CD8-positive, alpha-beta T cell (primary cell): ENCODE measurements at regions of chr1 and their contacts with region 1.

Region 1: DNA sequence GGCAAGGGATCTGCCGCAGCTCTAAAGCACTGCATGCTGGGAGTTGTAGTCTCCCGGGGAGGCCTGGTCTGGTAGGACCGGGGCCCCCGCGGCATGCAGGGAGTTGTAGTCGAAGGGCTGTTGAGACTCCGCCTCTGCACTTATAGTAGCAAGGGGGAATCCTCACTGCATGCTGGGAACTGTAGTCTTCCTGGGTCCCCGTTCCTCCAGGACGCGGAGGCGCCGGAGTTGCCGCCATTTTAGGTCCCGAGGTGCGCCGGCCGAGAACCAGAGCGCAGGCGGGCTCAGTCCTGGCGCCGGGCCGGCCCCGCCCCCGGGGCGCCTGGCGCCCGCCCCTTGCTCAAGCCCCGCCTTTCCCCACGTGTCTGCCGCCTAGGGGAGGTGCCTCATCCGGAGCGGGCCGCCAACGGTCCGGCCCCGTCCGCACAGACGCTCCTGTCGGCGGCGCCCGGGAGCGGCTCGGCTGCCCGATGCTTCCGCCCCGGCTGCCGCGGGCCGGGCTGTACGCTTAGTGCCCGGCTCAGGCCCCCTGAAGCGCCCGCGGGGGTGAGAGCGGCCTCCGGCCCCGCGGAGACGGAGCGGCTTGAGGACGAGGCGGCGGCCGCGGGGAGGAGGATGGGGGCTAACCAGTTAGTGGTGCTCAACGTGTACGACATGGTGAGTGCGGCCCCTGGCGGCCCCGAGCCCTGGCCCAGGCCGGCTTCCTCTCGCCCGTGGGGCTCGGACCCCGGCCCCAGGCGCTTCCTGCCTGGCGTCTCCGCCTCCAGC is at the start of gene DESI2:
- DNase-seq: peak; percentile 95 to 100 (median 97)
- ATAC-seq: peak; percentile 92
- H3K4me3 ChIP-seq: peak within 1 kb of the TSS; percentile 67 to 95
- H3K4me3 Mint-ChIP-seq: no peak within 1 kb of the TSS
- H3K27ac ChIP-seq: peak within 1 kb of the TSS; percentile 68 to 73
- H3K27ac Mint-ChIP-seq: peak within 1 kb of the TSS; percentile 86
- H3K4me1 ChIP-seq: peaks cover 22% of the 10 kb centered on the region
- H3K4me1 Mint-ChIP-seq: peaks cover 26% of the 10 kb centered on the region
- H3K27me3 ChIP-seq: no peaks in the 10 kb centered on the region
- H3K27me3 Mint-ChIP-seq: no peaks in the 10 kb centered on the region
- CTCF ChIP-seq: peak; percentile 39
- total RNA-seq, gene DESI2: 14.5 to 16.2 TPM

Region 2: DNA sequence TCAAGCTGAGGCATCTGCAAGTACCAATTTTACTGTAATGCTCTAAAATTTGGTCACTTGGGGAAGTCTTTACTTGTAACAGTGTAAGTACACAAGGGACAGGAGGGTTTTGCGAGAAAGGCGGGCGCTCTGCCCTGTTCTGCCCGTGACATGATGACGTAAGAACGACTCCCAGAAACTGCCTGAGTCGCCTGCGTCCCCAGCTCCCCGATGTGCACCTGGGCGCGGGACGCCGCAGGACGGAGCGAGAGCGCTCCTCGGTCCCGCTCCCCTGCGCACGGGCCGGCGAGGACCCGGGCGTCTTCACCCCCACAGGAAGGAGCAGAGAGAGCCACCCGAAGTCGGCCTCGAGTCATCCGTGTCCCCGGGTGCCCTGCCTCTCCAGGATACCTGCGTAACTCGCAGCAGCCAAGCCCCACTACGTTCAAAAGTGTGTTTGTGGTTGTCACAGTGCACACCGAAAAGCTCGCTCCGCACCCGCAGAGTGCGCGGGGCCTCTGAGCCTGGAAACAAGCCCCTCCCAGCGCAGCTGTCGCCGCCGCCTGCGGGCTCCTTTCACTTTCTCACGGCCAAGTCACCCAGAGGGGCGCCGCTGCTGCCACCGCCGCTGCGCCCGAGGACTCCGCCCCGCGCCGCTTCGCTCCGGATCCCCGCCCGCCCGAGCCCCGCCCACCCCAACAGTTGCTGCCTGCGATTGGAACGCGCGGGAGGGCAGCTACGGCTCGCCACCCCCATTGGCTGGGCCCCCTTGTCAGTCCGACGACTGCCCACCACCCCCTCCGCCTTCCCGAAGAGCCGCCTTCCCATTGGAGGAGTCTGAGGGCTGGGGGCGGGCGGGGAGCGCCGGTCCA is 605.0 kb before region 1 on chr1:
- CTCF ChIA-PET with region 1: no interaction called
- POLR2A ChIA-PET with region 1: interaction called, 3 read pairs
- intact Hi-C with region 1: loop called in 1 of 2 experiments (anchors 10 kb)
- DNase-seq: peak; percentile 95 to 99 (median 97)
- ATAC-seq: peak; percentile 72
- H3K4me3 ChIP-seq: peak overlapping the region; percentile 83
- H3K4me3 Mint-ChIP-seq: peak overlapping the region; percentile 89
- H3K27ac ChIP-seq: peak overlapping the region; percentile 95 to 97
- H3K27ac Mint-ChIP-seq: peak overlapping the region; percentile 98
- H3K4me1 ChIP-seq: peaks cover 40% of the 10 kb centered on the region
- H3K4me1 Mint-ChIP-seq: peaks cover 26% of the 10 kb centered on the region
- H3K27me3 ChIP-seq: no peaks in the 10 kb centered on the region
- H3K27me3 Mint-ChIP-seq: no peaks in the 10 kb centered on the region
- CTCF ChIP-seq: no peak

Region 3: GRCh38 chr1:244451951-244452795 is 200.7 kb before region 1 on chr1:
- CTCF ChIA-PET with region 1: no interaction called
- POLR2A ChIA-PET with region 1: interaction called, 3 read pairs
- intact Hi-C with region 1: loop called (anchors 1 kb)
- DNase-seq: peak; percentile 97 to 100 (median 99)
- ATAC-seq: peak; percentile 83
- H3K4me3 ChIP-seq: peak overlapping the region; percentile 78 to 95
- H3K4me3 Mint-ChIP-seq: peak overlapping the region; percentile 91
- H3K27ac ChIP-seq: peak overlapping the region; percentile 95 to 96
- H3K27ac Mint-ChIP-seq: peak overlapping the region; percentile 97
- H3K4me1 ChIP-seq: peaks cover 32% of the 10 kb centered on the region
- H3K4me1 Mint-ChIP-seq: peaks cover 45% of the 10 kb centered on the region
- H3K27me3 ChIP-seq: no peaks in the 10 kb centered on the region
- H3K27me3 Mint-ChIP-seq: no peaks in the 10 kb centered on the region
- CTCF ChIP-seq: peak; percentile 55

Region 4: GRCh38 chr1:244599937-244600350 is 52.9 kb before region 1 on chr1:
- CTCF ChIA-PET with region 1: interaction called, 6 read pairs
- POLR2A ChIA-PET with region 1: no interaction called
- intact Hi-C with region 1: loop called in 1 of 2 experiments (anchors 1 kb)
- DNase-seq: peak in 5 of 9 experiments; percentile 6 to 38 (median 24)
- ATAC-seq: peak; percentile 87
- H3K4me3 ChIP-seq: no peak overlapping the region
- H3K4me3 Mint-ChIP-seq: no peak overlapping the region
- H3K27ac ChIP-seq: no peak overlapping the region
- H3K27ac Mint-ChIP-seq: no peak overlapping the region
- H3K4me1 ChIP-seq: no peaks in the 10 kb centered on the region
- H3K4me1 Mint-ChIP-seq: no peaks in the 10 kb centered on the region
- H3K27me3 ChIP-seq: no peaks in the 10 kb centered on the region
- H3K27me3 Mint-ChIP-seq: no peaks in the 10 kb centered on the region
- CTCF ChIP-seq: no peak

Region 5: GRCh38 chr1:244680667-244681066 is 27.8 kb after region 1 on chr1:
- CTCF ChIA-PET with region 1: no interaction called
- POLR2A ChIA-PET with region 1: no interaction called
- intact Hi-C with region 1: no loop called
- DNase-seq: no peak
- ATAC-seq: no peak
- H3K4me3 ChIP-seq: no peak overlapping the region
- H3K4me3 Mint-ChIP-seq: no peak overlapping the region
- H3K27ac ChIP-seq: no peak overlapping the region
- H3K27ac Mint-ChIP-seq: no peak overlapping the region
- H3K4me1 ChIP-seq: no peaks in the 10 kb centered on the region
- H3K4me1 Mint-ChIP-seq: peaks cover 35% of the 10 kb centered on the region
- H3K27me3 ChIP-seq: no peaks in the 10 kb centered on the region
- H3K27me3 Mint-ChIP-seq: no peaks in the 10 kb centered on the region
- CTCF ChIP-seq: no peak

Region 6: GRCh38 chr1:244735404-244735803 is 82.5 kb after region 1 on chr1:
- CTCF ChIA-PET with region 1: no interaction called
- POLR2A ChIA-PET with region 1: no interaction called
- intact Hi-C with region 1: no loop called
- DNase-seq: no peak
- ATAC-seq: no peak
- H3K4me3 ChIP-seq: no peak overlapping the region
- H3K4me3 Mint-ChIP-seq: no peak overlapping the region
- H3K27ac ChIP-seq: no peak overlapping the region
- H3K27ac Mint-ChIP-seq: no peak overlapping the region
- H3K4me1 ChIP-seq: no peaks in the 10 kb centered on the region
- H3K4me1 Mint-ChIP-seq: peaks cover 2% of the 10 kb centered on the region
- H3K27me3 ChIP-seq: no peaks in the 10 kb centered on the region
- H3K27me3 Mint-ChIP-seq: peaks cover 7% of the 10 kb centered on the region
- CTCF ChIP-seq: no peak

Region 7: DNA sequence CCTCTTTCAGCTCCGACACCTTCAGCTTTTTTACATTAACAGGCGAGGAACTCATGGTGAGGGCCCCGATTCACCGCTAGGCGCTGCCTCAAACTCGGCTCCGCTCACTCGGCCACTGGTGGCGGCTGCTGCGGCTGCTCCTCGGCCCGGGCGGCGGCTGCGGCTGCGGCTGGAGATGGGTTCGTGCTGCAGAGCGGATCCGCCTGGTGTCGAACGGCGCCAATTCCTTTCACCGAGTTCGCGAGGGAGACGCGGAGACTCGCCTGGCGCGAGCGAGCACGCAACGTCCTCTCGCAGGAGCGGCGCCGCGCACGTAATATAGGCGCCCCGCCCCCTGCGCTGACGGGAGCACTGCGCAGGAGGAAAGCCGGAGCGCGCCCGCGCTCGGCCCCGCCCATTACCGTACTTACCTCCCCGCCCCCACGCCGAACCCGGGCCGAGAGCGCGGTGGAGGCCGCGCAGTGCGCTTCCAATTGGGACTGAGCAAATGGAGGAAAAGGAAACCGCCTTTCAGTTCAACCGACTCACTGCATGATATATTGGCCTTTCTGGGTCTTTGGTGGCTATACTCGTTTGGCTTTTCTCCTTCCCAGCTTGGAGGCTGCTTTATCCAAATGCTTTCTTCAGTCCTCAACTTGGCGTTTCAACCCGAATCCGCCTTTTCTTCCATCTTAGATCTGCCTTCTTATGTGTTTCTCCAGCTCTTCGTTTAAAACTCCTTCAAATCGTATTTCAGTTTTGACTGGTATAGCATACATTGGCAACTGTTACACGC is 211.6 kb after region 1 on chr1 and contains the start of gene HNRNPU:
- CTCF ChIA-PET with region 1: no interaction called
- POLR2A ChIA-PET with region 1: interaction called, 3 read pairs
- intact Hi-C with region 1: loop called (anchors 1 to 2 kb)
- DNase-seq: peak; percentile 91 to 99 (median 96)
- ATAC-seq: peak; percentile 63
- H3K4me3 ChIP-seq: peak within 1 kb of the TSS; percentile 85 to 88
- H3K4me3 Mint-ChIP-seq: peak within 1 kb of the TSS; percentile 94
- H3K27ac ChIP-seq: peak within 1 kb of the TSS; percentile 91 to 94
- H3K27ac Mint-ChIP-seq: peak within 1 kb of the TSS; percentile 98
- H3K4me1 ChIP-seq: peaks cover 34% of the 10 kb centered on the region
- H3K4me1 Mint-ChIP-seq: peaks cover 45% of the 10 kb centered on the region
- H3K27me3 ChIP-seq: no peaks in the 10 kb centered on the region
- H3K27me3 Mint-ChIP-seq: no peaks in the 10 kb centered on the region
- CTCF ChIP-seq: no peak
- total RNA-seq, gene HNRNPU: 411 to 415 TPM

Region 8: GRCh38 chr1:244918421-244919319 is 265.8 kb after region 1 on chr1:
- CTCF ChIA-PET with region 1: no interaction called
- POLR2A ChIA-PET with region 1: no interaction called
- intact Hi-C with region 1: loop called (anchors 2 to 5 kb)
- DNase-seq: peak; percentile 36 to 91 (median 68)
- ATAC-seq: peak; percentile 96
- H3K4me3 ChIP-seq: peak overlapping the region; percentile 55
- H3K4me3 Mint-ChIP-seq: peak overlapping the region; percentile 86
- H3K27ac ChIP-seq: peak overlapping the region in 1 of 2 experiments; percentile 33
- H3K27ac Mint-ChIP-seq: peak overlapping the region; percentile 64
- H3K4me1 ChIP-seq: peaks cover 6% of the 10 kb centered on the region
- H3K4me1 Mint-ChIP-seq: peaks cover 11% of the 10 kb centered on the region
- H3K27me3 ChIP-seq: no peaks in the 10 kb centered on the region
- H3K27me3 Mint-ChIP-seq: no peaks in the 10 kb centered on the region
- CTCF ChIP-seq: no peak

Region 9: DNA sequence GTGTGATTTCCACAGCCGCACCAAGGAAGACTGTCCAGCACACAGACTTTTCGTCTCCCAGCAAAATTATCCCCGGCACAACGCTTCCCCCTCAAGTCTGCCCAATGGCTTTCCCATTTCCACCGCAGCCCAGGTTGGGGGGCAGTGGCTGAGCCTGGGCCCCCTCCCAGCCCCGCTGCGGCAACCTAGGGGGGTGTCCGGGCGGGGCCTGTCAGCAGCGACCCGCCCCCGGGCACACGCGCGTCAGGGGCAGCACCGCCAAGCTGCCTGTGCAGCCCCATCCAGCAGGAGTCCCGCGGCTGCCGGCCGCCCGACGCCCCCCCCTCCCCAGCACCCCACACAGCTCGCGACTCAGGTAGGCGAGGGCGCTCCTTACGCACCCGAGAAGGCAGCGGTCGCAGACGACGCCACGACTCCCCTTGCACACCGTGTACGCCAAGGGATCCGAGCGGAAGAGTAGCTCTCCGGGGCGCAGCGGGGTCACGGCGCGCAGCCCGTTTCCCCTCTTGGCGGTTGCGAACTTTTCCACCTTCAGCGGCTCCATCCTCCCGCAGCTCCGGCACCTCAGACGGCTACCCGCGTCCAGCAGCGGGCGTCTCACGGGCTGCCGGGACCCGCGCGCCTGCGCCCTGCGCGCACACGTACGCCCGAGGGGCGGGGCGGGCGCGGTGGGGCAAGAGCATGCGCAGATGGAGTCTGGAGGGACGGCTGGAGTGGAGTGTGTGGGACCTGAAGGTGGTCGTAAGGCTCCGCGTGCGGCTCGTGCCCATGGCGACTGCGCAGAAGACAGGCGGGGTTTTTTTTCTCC is 1854.0 kb after region 1 on chr1 and contains the start of gene SMYD3:
- CTCF ChIA-PET with region 1: no interaction called
- POLR2A ChIA-PET with region 1: no interaction called
- intact Hi-C with region 1: loop called in 1 of 2 experiments (anchors 10 kb)
- DNase-seq: peak; percentile 56 to 92 (median 75)
- ATAC-seq: peak; percentile 88
- H3K4me3 ChIP-seq: peak within 1 kb of the TSS; percentile 77 to 92
- H3K4me3 Mint-ChIP-seq: peak within 1 kb of the TSS; percentile 88
- H3K27ac ChIP-seq: peak within 1 kb of the TSS; percentile 56 to 59
- H3K27ac Mint-ChIP-seq: peak within 1 kb of the TSS; percentile 85
- H3K4me1 ChIP-seq: peaks cover 13% of the 10 kb centered on the region
- H3K4me1 Mint-ChIP-seq: peaks cover 35% of the 10 kb centered on the region
- H3K27me3 ChIP-seq: no peaks in the 10 kb centered on the region
- H3K27me3 Mint-ChIP-seq: no peaks in the 10 kb centered on the region
- CTCF ChIP-seq: no peak
- total RNA-seq, gene SMYD3: 20.5 to 21.2 TPM